Heart left ventricle (tissue), 16 donors: ENCODE measurements at regions of chr10 and their contacts with region 1.

Region 1: GRCh38 chr10:47384148-47384921 is at the start of gene ZNF488:
- DNase-seq: peak; percentile 85 to 92 (median 85)
- ATAC-seq: peak; percentile 98 to 99 (median 98)
- H3K4me3 ChIP-seq: peak within 1 kb of the TSS; percentile 49 to 91 (median 76)
- H3K27ac ChIP-seq: peak within 1 kb of the TSS; percentile 14 to 86 (median 73)
- H3K4me1 ChIP-seq: peaks cover 0 to 14% (median 6%) of the 10 kb centered on the region in 12 donors
- H3K27me3 ChIP-seq: peaks cover 0 to 4% (median 0%) of the 10 kb centered on the region in 9 donors
- CTCF ChIP-seq: peak in 1 of 12 donors; percentile 10
- POLR2A ChIP-seq: peak in 1 of 2 donors; percentile 38
- total RNA-seq, gene ZNF488: 0.06 to 0.25 (median 0.11) TPM in 4 of 9 donors, not detected in the others

Region 2: DNA sequence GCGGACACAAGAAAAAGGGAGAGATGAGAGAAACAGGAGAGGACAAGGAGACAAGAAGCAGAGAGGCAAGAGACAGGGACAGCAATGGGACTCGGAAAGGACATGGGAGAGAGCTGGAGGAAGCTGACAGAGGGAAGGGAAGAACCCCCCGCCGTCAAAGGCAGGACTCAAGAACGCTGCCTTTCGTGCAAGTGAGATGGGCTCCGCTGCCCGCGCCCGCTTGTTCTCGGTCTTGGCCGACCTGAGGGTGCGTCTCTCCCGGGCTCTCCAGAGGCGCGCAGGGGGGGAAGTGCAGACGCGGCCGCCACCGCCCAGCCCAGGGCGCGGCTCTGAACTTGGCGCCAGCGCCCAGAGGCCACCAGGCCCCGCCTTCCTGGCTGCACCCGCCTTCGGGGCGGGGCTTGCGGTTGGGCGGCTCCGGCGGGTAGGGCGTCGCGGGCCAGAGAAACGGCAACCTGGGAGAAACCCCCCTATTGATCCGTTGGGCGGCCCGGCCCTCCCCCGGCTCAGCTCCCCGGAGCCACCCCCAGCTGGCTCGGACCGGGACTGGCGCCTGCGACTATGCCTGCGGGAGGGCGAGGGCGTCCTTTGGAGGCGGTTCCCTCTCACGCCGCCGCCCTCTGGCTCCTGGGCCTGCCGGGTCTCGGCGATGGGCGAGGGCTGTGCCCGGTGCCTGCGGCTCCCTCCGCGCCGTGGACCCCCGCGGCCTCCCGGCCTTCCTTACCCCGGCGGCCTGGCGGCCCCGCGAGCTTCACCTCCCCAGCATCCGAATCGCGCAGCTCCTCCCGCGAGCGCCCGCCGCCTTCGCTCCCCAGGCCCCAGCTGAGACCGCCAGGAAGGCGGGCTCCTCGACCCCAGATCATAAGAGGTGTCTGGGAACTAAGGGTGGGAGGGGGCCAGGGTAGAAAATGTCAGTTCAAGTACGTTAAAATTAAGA is 1099.8 kb before region 1 on chr10:
- intact Hi-C with region 1: loop called in 1 of 10 experiments (anchors 5 kb)
- DNase-seq: peak; percentile 85 to 92 (median 87)
- ATAC-seq: peak; percentile 83 to 96 (median 95)
- H3K4me3 ChIP-seq: peak overlapping the region; percentile 65 to 89 (median 74)
- H3K27ac ChIP-seq: peak overlapping the region in 10 of 12 donors; percentile 38 to 83 (median 68)
- H3K4me1 ChIP-seq: peaks cover 0 to 30% (median 15%) of the 10 kb centered on the region in 12 donors
- H3K27me3 ChIP-seq: peaks cover 0 to 2% (median 0%) of the 10 kb centered on the region in 9 donors
- CTCF ChIP-seq: no peak
- POLR2A ChIP-seq: peak in 1 of 2 donors; percentile 47

Region 3: DNA sequence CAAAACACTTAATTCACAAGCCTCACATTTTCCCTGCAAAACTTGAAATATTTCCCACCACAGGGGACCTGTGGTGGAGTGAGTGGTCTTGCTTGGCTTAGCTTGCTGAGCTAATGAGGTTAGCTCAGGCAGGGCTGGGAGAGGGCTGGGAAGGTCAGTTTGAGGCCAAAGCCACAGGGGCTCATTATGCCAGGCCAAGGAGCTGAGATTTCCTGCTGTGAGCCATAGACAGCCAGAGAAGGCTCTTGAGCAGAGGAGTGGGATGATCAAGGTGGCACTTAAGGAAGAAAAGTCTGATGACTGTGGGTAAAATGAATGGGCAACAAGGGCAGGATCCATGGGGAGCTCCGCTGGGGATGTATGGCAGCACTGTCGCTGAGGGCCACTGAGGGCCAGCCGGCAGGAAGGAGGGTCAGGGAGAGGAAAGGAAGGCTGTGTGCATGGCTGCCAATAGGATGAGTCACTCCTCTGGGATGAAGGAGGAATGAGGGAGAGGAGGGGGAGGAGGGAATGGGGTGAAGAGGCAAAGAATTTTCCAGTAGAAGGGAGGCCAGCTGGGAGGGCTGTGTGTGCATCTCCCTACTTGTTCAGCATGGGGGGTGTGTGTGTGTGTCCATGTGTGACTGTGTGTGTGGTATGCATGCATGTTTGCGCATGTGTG is 18.4 kb after region 1 on chr10:
- intact Hi-C with region 1: loop called in 1 of 10 experiments (anchors 2 kb)
- DNase-seq: peak in 4 of 5 donors; percentile 68 to 77 (median 72)
- ATAC-seq: peak; percentile 75 to 98 (median 91)
- H3K4me3 ChIP-seq: no peak overlapping the region
- H3K27ac ChIP-seq: peak overlapping the region in 6 of 12 donors; percentile 1 to 48 (median 28)
- H3K4me1 ChIP-seq: peaks cover 0 to 21% (median 10%) of the 10 kb centered on the region in 12 donors
- H3K27me3 ChIP-seq: no peaks in the 10 kb centered on the region
- CTCF ChIP-seq: no peak
- POLR2A ChIP-seq: no peak